ENCODE measurements at regions of chr5 and their contacts with region 1.

Region 1: DNA sequence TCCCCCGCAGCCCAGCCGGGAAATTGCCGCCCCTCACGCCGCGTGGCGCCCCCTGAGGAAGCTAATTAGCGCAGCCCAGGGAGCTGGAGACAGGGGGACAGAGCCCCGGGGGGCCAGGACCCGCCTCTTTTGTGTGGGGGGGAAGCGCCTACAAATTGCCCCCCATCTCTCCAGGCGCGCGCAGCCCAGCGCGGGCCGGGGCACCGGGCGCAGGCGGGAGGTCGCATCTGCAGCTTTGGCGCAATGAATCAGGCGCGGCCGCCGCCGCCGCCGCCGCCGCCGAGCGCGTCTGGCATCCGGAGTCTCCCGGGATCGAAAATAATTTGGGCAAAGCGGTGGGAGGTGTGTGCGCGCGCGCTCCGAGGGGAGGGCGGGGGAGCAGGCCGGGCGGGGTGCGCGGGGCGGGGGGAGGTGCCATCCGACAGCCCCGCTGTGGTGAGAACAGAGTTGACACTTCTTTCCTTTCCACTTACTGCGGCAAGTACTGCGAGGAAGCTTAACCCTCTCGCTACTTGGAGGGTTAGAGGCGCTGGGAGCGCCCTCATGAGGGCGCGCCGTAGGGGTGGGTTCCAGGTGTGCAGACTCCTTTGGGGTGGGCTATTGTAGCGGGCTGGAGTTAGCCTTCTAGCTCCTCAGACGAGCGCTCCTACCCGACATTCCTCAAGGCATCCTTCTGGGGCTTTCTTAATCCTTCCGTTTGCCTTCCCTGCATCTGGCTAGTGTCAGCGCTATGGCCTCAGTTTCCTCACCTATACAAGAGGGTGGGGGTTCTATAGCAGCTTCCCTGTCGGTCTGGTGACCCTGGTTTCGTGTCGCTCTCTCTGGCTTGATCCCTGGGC is 63.1 kb downstream of the CXXC5 start:
- DNase-seq: peak; percentile 78

Region 2: DNA sequence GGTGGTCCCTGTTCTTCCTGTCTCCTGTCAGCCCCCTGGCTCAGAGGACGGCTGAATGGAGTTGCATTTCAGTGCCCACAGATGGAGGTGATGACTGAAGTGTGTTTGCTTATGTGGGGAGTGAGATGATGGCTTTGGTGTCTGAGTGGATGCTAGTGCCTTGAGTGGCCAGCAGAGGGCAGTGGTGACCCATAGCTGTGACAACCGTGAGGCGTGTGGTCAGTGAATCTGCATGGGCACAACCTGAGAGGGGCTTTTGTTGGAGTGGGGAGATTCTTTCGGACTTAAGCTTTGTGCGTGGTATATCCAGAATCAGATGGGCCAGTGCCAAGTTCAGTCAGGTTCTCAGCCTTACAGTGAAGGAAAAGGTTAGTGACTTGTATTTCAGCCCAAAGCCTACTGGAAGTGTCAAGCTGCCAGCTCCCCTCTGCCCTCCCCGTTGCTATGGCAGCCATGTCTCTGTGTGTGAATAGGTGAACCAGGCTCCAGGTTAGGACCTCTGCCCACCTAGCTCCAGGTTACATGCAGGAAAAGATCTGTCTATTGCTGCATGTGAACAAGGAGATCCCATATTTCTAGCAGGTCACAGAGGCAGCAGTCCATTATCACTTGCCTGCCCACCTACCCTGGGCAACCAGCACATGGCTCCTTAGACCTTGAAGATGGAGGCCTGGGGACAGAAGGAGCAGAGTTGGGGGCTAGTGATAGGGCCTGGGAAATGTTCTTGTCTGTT is 77.8 kb before region 1 on chr5:
- in situ Hi-C with region 1: loop called (anchors 5 kb)
- DNase-seq: peak; percentile 91

Region 3: GRCh38 chr5:139670369-139671095 is 40.8 kb before region 1 on chr5:
- in situ Hi-C with region 1: no loop called
- DNase-seq: no peak

Measured in G401 (cell line).